Gastrocnemius medialis (tissue), 4 donors: ENCODE measurements at regions of chr1 and their contacts with region 1.

Region 1: GRCh38 chr1:165073185-165074007 is 283.1 kb downstream of the LMX1A start:
- DNase-seq: no peak
- ATAC-seq: peak; percentile 63 to 84
- H3K4me3 ChIP-seq: no peak overlapping the region
- H3K27ac ChIP-seq: no peak overlapping the region
- H3K4me1 ChIP-seq: no peaks in the 10 kb centered on the region
- H3K27me3 ChIP-seq: no peaks in the 10 kb centered on the region
- CTCF ChIP-seq: peak; percentile 59 to 76 (median 69)
- POLR2A ChIP-seq: no peak

Region 2: GRCh38 chr1:163410073-163410999 is 1663.1 kb before region 1 on chr1:
- in situ Hi-C with region 1: loop called in 2 of 4 experiments (anchors 25 kb)
- intact Hi-C with region 1: no loop called
- DNase-seq: no peak
- ATAC-seq: no peak
- H3K4me3 ChIP-seq: no peak overlapping the region
- H3K27ac ChIP-seq: no peak overlapping the region
- H3K4me1 ChIP-seq: no peaks in the 10 kb centered on the region
- H3K27me3 ChIP-seq: no peaks in the 10 kb centered on the region
- CTCF ChIP-seq: peak; percentile 13 to 58 (median 50)
- POLR2A ChIP-seq: no peak

Region 3: DNA sequence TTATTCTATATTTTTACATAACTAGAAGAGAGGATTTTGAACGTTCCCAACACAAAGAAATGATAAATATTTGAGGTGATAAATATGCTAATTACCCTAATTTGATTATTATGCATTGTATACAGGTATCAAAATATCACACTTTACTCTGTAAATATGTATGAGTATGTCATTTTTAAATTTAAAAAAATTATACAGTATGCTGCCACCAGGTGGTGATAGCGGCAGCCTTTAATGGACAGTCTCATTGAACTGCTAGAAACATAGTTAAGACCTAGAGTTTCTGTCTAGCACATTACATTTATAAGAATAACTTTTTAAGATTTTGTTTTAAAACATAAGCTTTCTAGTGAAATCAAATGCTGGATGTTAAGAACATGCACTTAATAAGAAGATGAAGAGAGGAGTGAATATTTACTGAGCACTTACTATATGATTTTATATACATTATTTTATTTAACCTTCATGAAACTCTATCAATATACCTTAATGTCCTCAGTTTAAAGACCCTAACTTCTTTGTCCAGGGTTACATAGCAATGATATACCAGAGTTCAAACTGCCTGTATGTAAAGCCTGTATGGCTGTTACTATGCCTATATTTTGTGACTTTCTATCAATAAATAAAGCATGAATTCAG is 1544.6 kb before region 1 on chr1:
- in situ Hi-C with region 1: loop called in 1 of 4 experiments (anchors 25 kb)
- intact Hi-C with region 1: no loop called
- DNase-seq: no peak
- ATAC-seq: no peak
- H3K4me3 ChIP-seq: no peak overlapping the region
- H3K27ac ChIP-seq: no peak overlapping the region
- H3K4me1 ChIP-seq: no peaks in the 10 kb centered on the region
- H3K27me3 ChIP-seq: no peaks in the 10 kb centered on the region
- CTCF ChIP-seq: peak in 3 of 5 experiments; percentile 20 to 47 (median 35)
- POLR2A ChIP-seq: no peak

Region 4: GRCh38 chr1:164165462-164165861 is 907.9 kb before region 1 on chr1:
- in situ Hi-C with region 1: no loop called
- intact Hi-C with region 1: loop called (anchors 5 kb)
- DNase-seq: no peak
- ATAC-seq: no peak
- H3K4me3 ChIP-seq: no peak overlapping the region
- H3K27ac ChIP-seq: no peak overlapping the region
- H3K4me1 ChIP-seq: no peaks in the 10 kb centered on the region
- H3K27me3 ChIP-seq: no peaks in the 10 kb centered on the region
- CTCF ChIP-seq: no peak
- POLR2A ChIP-seq: no peak

Region 5: GRCh38 chr1:164240083-164240482 is 833.3 kb before region 1 on chr1:
- in situ Hi-C with region 1: no loop called
- intact Hi-C with region 1: loop called (anchors 2 kb)
- DNase-seq: no peak
- ATAC-seq: peak; percentile 39 to 53
- H3K4me3 ChIP-seq: no peak overlapping the region
- H3K27ac ChIP-seq: no peak overlapping the region
- H3K4me1 ChIP-seq: no peaks in the 10 kb centered on the region
- H3K27me3 ChIP-seq: no peaks in the 10 kb centered on the region
- CTCF ChIP-seq: peak in 2 of 5 experiments; percentile 25
- POLR2A ChIP-seq: no peak

Region 6: DNA sequence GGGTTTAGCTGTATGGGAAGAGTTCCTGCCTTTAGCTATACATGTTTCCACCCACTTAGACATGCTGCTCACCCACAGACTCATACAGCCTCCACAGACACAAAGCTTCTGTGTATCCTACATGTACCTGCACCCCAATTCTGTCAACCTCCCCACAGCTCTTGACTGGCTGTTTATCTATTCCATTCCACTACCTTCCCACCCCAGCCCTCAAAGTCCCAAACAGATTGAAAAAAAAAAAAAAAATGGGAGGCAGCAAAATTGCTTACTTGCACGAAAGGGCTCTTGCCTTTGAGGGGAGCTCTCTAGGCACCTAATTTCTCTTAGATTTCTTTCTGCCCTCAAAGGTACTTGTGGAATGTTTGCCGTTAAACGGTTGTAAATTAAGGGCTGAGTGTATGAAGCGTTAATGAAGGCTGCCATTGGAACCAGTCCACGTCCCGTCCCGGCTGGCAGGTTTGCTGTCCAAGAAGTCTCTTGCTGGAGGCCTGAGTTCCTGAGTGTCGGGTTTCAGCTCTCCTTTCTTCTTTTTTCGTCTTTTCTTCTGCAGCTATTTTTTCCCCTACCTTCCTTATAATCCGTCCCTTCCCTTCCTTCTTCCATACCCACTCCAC is 470.8 kb before region 1 on chr1:
- in situ Hi-C with region 1: no loop called
- intact Hi-C with region 1: loop called (anchors 10 kb)
- DNase-seq: peak; percentile 26 to 49
- ATAC-seq: peak; percentile 55 to 71
- H3K4me3 ChIP-seq: peak overlapping the region; percentile 19 to 27 (median 24)
- H3K27ac ChIP-seq: peak overlapping the region; percentile 70 to 80 (median 76)
- H3K4me1 ChIP-seq: peaks cover 40 to 68% of the 10 kb centered on the region in 2 donors
- H3K27me3 ChIP-seq: no peaks in the 10 kb centered on the region
- CTCF ChIP-seq: no peak
- POLR2A ChIP-seq: no peak